AG04450 (cell line): ENCODE measurements at regions of chr12 and their contacts with region 1.

Region 1: DNA sequence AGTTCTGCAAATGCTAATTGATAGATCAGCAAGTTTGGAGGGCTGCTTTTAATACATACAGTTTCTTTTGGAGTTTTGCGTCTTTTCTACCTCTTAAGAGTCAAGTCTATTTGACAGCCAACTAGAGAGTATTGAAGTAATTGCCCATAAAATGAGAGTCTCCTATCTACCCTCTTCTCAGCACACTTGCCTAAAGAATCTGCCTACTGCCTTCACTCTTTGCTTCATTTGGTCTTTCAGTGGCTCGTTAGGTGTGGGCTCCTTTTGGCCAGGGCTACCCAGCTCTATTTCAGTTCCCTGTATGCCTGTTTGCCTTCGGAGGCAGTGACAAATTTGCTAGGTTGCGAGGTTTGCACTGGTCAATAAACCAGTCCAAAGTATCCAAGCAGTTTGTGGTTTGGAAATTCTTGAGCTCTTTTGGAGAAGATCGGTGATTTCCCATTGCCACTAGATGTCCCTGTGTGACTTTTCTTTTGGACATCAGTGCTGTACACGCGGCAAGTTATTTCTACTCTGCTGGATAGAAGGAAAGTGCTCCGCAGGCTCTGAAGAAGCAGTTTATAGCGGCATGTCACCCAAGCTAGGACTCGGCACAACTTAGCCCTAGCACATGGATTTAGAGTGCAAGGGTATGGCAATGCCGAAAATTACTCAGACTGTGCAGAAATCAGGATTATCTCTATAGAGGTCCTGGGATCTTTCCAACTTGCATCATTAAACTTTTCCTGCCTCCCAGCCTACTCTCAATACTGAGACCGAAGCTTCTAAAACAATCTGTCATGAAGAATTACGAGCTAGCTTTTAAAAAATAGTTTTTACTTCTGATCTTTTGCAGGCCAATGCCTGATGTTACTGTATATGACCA is 38.6 kb downstream of the MGST1 start:
- DNase-seq: peak; percentile 41
- H3K4me3 ChIP-seq: no peak overlapping the region
- H3K27ac ChIP-seq: no peak overlapping the region
- H3K27me3 ChIP-seq: no peaks in the 10 kb centered on the region
- CTCF ChIP-seq: peak; percentile 62

Region 2: GRCh38 chr12:16329578-16329977 is 56.4 kb before region 1 on chr12:
- CTCF ChIA-PET with region 1: no interaction called
- POLR2A ChIA-PET with region 1: no interaction called
- DNase-seq: no peak
- H3K4me3 ChIP-seq: no peak overlapping the region
- H3K27ac ChIP-seq: no peak overlapping the region
- H3K27me3 ChIP-seq: no peaks in the 10 kb centered on the region
- CTCF ChIP-seq: no peak

Region 3: GRCh38 chr12:16531621-16532020 is 145.6 kb after region 1 on chr12:
- CTCF ChIA-PET with region 1: no interaction called
- POLR2A ChIA-PET with region 1: no interaction called
- DNase-seq: no peak
- H3K4me3 ChIP-seq: no peak overlapping the region
- H3K27ac ChIP-seq: no peak overlapping the region
- H3K27me3 ChIP-seq: no peaks in the 10 kb centered on the region
- CTCF ChIP-seq: no peak

Region 4: GRCh38 chr12:16685107-16685506 is 299.1 kb after region 1 on chr12:
- CTCF ChIA-PET with region 1: interaction called, 38 read pairs
- POLR2A ChIA-PET with region 1: no interaction called
- DNase-seq: no peak
- H3K4me3 ChIP-seq: no peak overlapping the region
- H3K27ac ChIP-seq: no peak overlapping the region
- H3K27me3 ChIP-seq: no peaks in the 10 kb centered on the region
- CTCF ChIP-seq: peak; percentile 41

Region 5: DNA sequence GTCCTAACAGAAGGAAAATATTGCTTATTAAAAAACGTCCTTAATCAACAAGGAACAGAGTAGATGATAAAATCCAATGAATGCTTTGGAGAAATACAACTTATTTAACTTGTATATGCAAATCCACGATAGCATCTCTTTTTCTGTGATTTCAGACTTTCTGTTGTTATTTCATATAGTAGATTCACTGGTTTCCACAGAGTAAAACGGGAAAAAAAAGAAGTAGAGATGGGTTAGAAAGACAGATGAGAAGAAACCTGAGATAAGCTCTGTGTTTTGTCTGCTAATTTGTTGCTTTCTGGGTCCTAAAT is 1256.3 kb after region 1 on chr12:
- CTCF ChIA-PET with region 1: interaction called, 32 read pairs
- POLR2A ChIA-PET with region 1: no interaction called
- DNase-seq: no peak
- H3K4me3 ChIP-seq: no peak overlapping the region
- H3K27ac ChIP-seq: no peak overlapping the region
- H3K27me3 ChIP-seq: no peaks in the 10 kb centered on the region
- CTCF ChIP-seq: no peak